Endothelial cell of umbilical vein (primary cell): ENCODE measurements at regions of chr1 and their contacts with region 1.

Region 1: DNA sequence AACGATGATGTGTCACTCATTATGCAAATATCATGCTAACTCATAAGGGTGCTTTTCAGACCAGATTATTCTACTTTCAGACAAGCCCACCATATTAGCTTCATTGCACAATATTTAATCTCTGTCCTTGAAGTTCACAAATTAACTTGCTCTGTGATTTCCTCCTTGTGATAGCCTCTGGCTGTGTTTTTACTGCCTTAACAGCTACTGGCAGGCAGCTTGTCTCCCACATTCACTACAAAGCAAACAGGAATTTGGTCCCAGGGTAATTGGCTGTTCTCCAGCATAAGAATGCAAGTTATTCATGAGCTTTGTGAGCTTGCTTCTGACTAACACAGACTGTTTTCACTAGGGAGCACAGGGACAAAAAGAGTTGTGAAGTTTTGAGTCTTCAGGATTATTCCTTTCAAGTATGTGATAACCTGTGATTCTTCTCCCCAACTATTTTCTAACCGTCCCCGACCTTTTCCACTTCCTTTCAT is 87.9 kb upstream of the HMCN1 start:
- DNase-seq: peak; percentile 99
- H3K4me3 ChIP-seq: peak overlapping the region in 1 of 3 experiments; percentile 27
- H3K27ac ChIP-seq: peak overlapping the region; percentile 72
- H3K4me1 ChIP-seq: peaks cover 23% of the 10 kb centered on the region
- H3K27me3 ChIP-seq: no peaks in the 10 kb centered on the region
- CTCF ChIP-seq: no peak
- POLR2A ChIP-seq: no peak

Region 2: DNA sequence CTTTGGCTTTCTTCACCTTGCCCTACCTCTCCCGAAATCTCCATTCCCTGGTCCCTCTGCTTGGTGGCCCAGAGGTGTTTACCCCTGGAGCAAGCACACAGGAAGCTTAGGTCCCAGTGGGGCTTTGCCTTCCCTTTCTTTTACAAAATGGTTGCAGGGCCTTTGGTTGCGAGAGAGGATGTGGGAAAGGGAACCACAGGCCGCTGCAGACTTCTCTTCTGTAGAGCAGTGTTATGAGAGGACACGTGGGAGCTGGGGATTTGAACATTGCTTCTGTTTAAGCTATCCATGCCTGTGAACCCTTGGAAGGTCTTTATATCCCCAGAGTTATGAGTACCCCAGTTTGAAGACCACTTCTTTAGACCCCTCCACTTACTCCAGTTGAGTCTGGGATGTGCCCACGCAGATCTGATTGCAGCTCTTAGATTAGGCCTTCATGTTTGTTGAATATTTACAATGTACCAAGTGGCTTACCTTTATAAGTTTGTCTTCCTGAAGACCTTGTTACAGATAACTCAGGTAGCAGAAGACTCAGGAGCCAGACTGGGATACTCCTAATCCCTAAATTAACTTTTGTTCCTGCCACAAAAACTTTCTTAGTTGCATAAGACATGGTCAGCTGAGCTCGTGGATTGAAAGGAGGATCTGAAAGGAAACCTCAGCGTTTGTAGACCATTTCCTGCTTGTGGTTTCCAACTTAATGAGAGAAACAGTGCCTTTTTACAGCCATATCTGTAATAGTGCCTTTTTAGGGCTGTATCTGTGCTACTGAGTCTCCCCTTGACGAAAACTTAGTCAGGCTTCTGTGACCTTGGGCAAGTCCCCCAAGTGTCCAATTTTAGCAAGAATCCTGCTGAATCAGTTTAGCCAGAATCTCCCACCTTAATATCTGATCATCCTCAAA is 307.3 kb before region 1 on chr1:
- CTCF ChIA-PET with region 1: no interaction called
- POLR2A ChIA-PET with region 1: no interaction called
- dilution Hi-C with region 1: no loop called
- intact Hi-C with region 1: no loop called
- DNase-seq: no peak
- H3K4me3 ChIP-seq: no peak overlapping the region
- H3K27ac ChIP-seq: no peak overlapping the region
- H3K4me1 ChIP-seq: no peaks in the 10 kb centered on the region
- H3K27me3 ChIP-seq: no peaks in the 10 kb centered on the region
- CTCF ChIP-seq: no peak
- POLR2A ChIP-seq: no peak

Region 3: GRCh38 chr1:185670187-185670627 is 24.0 kb after region 1 on chr1:
- CTCF ChIA-PET with region 1: interaction called, 22 read pairs
- POLR2A ChIA-PET with region 1: interaction called, 4 read pairs
- dilution Hi-C with region 1: no loop called
- intact Hi-C with region 1: loop called (anchors 2 kb)
- DNase-seq: peak; percentile 74
- H3K4me3 ChIP-seq: no peak overlapping the region
- H3K27ac ChIP-seq: no peak overlapping the region
- H3K4me1 ChIP-seq: peaks cover 17% of the 10 kb centered on the region
- H3K27me3 ChIP-seq: no peaks in the 10 kb centered on the region
- CTCF ChIP-seq: peak; percentile 44 to 57
- POLR2A ChIP-seq: no peak

Region 4: DNA sequence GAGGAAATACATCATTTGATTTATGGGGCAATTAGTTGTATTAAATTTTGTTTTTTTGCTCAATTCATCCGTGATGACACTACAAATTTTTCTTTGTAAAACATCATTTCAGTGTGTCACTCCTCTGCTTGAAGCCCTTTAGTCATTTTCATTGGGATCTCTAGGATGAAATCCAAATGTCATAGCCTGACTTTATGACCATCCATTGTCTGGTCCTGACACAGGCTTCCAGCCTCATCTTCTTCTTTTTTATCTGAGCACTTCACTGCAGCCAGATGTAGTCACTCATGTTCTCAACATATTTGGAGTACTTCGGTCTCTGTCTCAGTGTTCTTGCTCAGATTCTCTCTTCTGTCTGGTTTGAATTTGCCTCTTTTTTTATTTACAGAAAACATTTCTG is 261.0 kb after region 1 on chr1:
- CTCF ChIA-PET with region 1: no interaction called
- POLR2A ChIA-PET with region 1: no interaction called
- dilution Hi-C with region 1: no loop called
- intact Hi-C with region 1: no loop called
- DNase-seq: no peak
- H3K4me3 ChIP-seq: no peak overlapping the region
- H3K27ac ChIP-seq: no peak overlapping the region
- H3K4me1 ChIP-seq: no peaks in the 10 kb centered on the region
- H3K27me3 ChIP-seq: no peaks in the 10 kb centered on the region
- CTCF ChIP-seq: no peak
- POLR2A ChIP-seq: no peak